A549 (cell line): ENCODE measurements at regions of chr7 and their contacts with region 1.

Region 1: GRCh38 chr7:1112109-1112508 is 24.2 kb downstream of the GPER1 start:
- DNase-seq: no peak
- ATAC-seq: no peak; a peak in 1 of 6 replicates
- H3K4me3 ChIP-seq: no peak overlapping the region
- H3K27ac ChIP-seq: no peak overlapping the region
- H3K4me1 ChIP-seq: no peaks in the 10 kb centered on the region
- CTCF ChIP-seq: no peak
- EP300 ChIP-seq: no peak
- POLR2A ChIP-seq: no peak
- RAD21 ChIP-seq: no peak

Region 2: DNA sequence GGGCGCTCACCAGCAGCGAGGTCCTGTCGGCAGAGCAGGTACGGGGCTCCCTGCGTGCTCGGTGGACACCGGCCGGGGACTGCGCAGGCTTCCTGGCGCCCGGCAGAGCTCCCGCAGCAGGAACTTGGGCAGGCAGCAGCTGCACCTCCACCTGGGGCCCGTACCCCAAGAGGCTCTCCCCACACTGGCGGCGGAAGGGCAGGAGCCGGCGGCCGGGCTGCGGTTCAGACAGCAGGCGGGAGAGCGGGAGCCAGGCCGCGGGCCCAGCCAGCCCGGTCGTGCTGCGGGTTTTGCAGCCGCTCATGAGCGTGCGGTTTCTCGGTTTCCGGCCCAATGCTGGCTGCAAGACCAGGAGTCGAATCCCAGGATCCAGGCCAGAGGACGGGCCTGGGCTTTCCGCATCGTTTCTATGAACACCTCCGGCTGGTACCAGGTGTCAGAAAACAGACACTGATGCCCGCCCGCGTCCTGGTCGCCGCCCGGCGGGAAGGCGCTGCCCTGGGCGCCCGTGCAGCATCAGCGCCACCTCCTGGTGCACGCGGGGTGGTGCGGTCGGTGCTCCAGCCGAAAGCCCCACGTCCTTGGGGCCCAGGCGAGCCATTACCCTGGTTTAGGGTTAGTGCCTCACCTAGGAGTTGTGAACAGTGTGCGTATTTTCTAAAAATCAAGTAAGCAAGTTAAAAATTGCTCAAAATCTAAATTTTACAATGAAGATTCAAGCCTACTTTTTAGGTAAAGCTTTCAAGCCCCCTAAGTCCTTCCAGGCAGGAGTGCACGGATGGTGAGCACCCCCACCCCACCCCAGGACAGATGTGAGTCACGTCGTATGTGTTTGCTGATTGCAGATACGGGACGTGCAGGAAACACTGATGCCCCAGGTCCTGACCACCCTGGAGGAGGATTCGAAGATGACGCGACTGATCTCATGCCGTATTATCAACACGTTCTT is 337.7 kb before region 1 on chr7:
- CTCF ChIA-PET with region 1: no interaction called
- POLR2A ChIA-PET with region 1: no interaction called
- DNase-seq: peak; percentile 52 to 53
- ATAC-seq: peak; percentile 72 to 87; a peak in 5 of 6 replicates
- H3K4me3 ChIP-seq: no peak overlapping the region
- H3K27ac ChIP-seq: no peak overlapping the region
- H3K4me1 ChIP-seq: peaks cover 9% of the 10 kb centered on the region; the same call in 2 of the 3 replicates
- CTCF ChIP-seq: peak; percentile 80
- EP300 ChIP-seq: no peak
- POLR2A ChIP-seq: no peak
- RAD21 ChIP-seq: peak; percentile 76 to 81

Region 3: DNA sequence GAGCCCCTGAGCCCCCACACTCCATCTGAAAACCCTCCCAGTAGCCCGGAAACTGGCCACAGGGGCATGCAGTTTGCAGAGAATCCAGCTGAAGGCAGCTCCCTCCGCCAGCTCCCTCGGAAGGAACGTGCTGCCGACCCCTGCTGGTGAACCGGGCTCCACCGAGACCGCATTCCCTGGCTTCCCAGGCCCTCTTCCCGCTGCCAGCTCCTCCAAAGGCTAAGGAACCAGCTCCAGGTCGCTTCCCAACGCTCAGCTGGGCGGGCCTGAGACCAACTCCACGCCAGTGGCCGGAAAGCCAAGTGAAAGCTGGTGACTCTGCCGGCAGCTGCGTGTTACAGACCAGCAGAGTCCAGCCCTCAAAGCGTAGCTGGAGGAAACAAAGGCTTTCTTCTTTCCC is 11.6 kb after region 1 on chr7:
- CTCF ChIA-PET with region 1: interaction called, 21 read pairs
- POLR2A ChIA-PET with region 1: no interaction called
- DNase-seq: peak; percentile 12 to 53
- ATAC-seq: peak in 1 of 2 experiments; percentile 90; a peak in 3 of 6 replicates
- H3K4me3 ChIP-seq: no peak overlapping the region
- H3K27ac ChIP-seq: no peak overlapping the region
- H3K4me1 ChIP-seq: no peaks in the 10 kb centered on the region
- CTCF ChIP-seq: 0 out of 3 replicates have a peak, but pooled peaks have one; percentile 5
- EP300 ChIP-seq: no peak
- POLR2A ChIP-seq: no peak
- RAD21 ChIP-seq: no peak